K562 (cell line): ENCODE measurements at regions of chr1 and their contacts with region 1.

Region 1: GRCh38 chr1:26889551-26890466 is at the start of gene GPN2:
- DNase-seq: peak; percentile 86 to 96 (median 91)
- ATAC-seq: peak; percentile 97
- H3K4me3 ChIP-seq: peak within 1 kb of the TSS; percentile 94
- H3K27ac ChIP-seq: peak within 1 kb of the TSS; percentile 91
- H3K4me1 ChIP-seq: peaks cover 13 to 27% of the 10 kb centered on the region in 2 experiments
- H3K27me3 ChIP-seq: no peaks in the 10 kb centered on the region
- CTCF ChIP-seq: no peak; a peak in 1 of 6 replicates
- EP300 ChIP-seq: no peak; the same call in 1 of the 2 replicates
- POLR2A ChIP-seq: peak; percentile 95
- RAD21 ChIP-seq: no peak; a peak in 1 of 4 replicates
- polyA plus RNA-seq, gene GPN2: 9.9 to 11.4 TPM

Region 2: DNA sequence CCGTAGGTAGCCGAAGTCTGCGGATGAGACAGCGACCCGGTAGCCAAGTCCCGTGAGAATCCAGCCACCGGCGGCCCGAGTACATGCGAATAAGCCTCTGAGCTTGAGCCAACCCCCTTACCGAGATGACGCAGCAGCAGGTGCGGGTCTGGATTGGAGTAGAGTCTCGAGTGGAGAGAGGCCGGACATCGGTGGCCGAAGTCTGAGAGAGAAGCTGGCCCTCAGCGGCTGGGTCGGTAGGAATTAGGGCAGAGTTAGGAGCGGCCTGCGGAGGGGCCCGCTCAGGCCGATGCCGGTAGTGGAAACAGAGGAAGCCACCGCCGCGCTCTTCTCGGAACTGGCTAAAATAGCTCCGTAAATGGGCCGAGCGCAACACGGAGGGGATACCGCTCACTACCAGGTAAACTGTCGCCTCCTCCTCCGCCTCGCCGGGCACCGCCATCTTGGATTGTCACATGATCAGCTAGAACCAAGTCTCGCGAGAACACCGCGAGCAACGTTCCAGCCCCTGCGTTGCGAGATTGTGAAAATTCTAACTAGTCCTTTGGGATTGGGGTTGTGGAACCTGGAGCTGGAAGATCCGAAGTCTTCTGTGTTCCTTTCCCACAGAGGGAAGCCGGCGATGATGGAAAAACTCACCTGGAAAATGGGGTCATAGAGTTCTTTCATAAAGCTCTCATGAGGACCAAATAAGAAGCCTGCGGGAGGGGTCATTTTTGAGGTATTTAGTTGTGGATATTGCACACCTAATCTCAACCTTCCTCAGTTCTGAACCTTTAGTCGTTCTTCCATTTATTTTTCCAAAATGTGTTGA is 10.4 kb after region 1 on chr1 and contains the start of gene GPATCH3:
- CTCF ChIA-PET with region 1: interaction called, 4 read pairs
- POLR2A ChIA-PET with region 1: interaction called, 110 read pairs
- in situ Hi-C with region 1: no loop called
- intact Hi-C with region 1: loop called (anchors 1 kb)
- DNase-seq: peak; percentile 92 to 99 (median 94)
- ATAC-seq: peak; percentile 92
- H3K4me3 ChIP-seq: peak within 1 kb of the TSS; percentile 91
- H3K27ac ChIP-seq: peak within 1 kb of the TSS; percentile 81
- H3K4me1 ChIP-seq: peaks cover 9 to 18% of the 10 kb centered on the region in 2 experiments; a peak in 4 of 5 replicates
- H3K27me3 ChIP-seq: no peaks in the 10 kb centered on the region; a peak in 1 of 5 replicates
- CTCF ChIP-seq: no peak
- EP300 ChIP-seq: peak; percentile 2; the same call in 1 of the 2 replicates
- POLR2A ChIP-seq: peak; percentile 96
- RAD21 ChIP-seq: no peak
- polyA plus RNA-seq, gene GPATCH3: 1.6 to 4.9 TPM

Region 3: DNA sequence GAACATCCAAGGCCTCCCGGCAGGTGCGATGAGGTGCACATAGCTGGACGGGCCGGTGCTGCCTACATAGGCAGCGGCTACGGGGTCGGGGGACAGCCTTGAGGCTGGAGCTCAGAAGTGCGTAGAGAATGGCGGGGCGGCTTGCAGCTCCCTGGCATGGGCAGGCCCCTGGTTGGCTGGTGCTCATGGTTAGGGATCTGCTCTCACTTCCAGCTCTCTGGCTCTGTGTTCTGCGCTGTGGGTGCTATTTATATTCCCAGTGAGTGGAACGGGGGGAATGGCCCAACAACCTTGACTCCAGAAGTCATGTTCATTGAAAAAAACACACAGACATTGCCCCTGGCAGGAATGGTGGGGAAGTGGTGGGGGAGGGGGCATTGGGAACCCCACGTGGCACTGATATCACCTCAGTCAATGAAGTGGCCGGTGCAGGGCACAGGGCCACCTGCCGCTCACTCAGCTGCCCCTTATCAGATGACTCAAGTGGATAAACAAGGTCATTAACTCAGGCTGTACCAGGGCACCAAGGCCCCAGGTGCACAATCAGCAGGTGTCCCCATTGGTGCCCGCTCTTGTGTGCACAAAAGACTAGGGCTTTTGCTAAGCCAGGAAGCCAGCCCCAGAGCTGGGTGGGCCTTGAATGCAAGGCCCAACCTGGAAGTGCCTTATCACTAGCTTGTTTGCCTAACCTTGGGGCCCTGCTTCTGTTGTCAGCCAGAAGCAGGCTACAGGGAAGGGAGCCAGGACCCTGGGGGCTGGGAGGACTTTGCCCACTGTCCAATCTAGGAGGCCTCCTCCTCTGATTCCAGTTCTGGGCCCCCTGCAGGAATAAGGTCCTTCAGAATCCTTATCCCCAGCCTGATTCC is 24.2 kb after region 1 on chr1 and contains the start of gene NR0B2:
- CTCF ChIA-PET with region 1: no interaction called
- POLR2A ChIA-PET with region 1: interaction called, 13 read pairs
- in situ Hi-C with region 1: no loop called
- intact Hi-C with region 1: no loop called
- DNase-seq: peak; percentile 65 to 85 (median 74)
- ATAC-seq: peak; percentile 88
- H3K4me3 ChIP-seq: no peak within 1 kb of the TSS
- H3K27ac ChIP-seq: peak within 1 kb of the TSS; percentile 69
- H3K4me1 ChIP-seq: peaks cover 28 to 31% of the 10 kb centered on the region in 2 experiments
- H3K27me3 ChIP-seq: no peaks in the 10 kb centered on the region
- CTCF ChIP-seq: no peak
- EP300 ChIP-seq: peak; percentile 55; the same call in 1 of the 2 replicates
- POLR2A ChIP-seq: no peak
- RAD21 ChIP-seq: peak in 1 of 2 experiments; percentile 8; a peak in 1 of 4 replicates
- polyA plus RNA-seq, gene NR0B2: not detected